Dorsolateral prefrontal cortex (tissue), 120 donors: ENCODE measurements at regions of chr17 and their contacts with region 1.

Region 1: DNA sequence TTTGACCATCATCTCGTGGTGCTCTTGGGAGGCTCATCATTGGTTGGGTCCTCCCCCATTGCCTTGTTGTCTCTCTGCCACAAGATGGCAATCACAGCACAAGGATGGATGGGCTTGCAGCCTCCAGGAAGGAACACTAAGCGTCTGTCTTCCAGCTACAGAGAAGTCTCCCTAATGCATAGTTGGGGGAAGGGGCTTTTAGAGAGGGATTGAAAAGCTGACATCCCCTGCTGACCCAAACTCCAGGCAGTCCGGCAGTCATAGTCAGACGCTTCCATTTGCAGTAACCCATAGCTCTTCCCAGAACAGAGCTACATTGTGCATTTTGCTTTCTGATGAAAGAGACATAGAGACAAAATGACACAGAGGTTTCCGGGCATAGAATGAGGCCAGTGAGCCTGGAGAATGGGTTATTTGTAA is 111.4 kb downstream of the UTP18 start:
- DNase-seq: peak in 9 of 10 donors; percentile 66 to 85 (median 80)
- H3K4me3 ChIP-seq: peak overlapping the region in 51 of 59 donors; percentile 3 to 68 (median 44)
- H3K27ac ChIP-seq: peak overlapping the region; percentile 43 to 99 (median 96)
- H3K27me3 ChIP-seq: no peaks in the 10 kb centered on the region
- CTCF ChIP-seq: peak; percentile 60 to 93 (median 82)

Region 2: DNA sequence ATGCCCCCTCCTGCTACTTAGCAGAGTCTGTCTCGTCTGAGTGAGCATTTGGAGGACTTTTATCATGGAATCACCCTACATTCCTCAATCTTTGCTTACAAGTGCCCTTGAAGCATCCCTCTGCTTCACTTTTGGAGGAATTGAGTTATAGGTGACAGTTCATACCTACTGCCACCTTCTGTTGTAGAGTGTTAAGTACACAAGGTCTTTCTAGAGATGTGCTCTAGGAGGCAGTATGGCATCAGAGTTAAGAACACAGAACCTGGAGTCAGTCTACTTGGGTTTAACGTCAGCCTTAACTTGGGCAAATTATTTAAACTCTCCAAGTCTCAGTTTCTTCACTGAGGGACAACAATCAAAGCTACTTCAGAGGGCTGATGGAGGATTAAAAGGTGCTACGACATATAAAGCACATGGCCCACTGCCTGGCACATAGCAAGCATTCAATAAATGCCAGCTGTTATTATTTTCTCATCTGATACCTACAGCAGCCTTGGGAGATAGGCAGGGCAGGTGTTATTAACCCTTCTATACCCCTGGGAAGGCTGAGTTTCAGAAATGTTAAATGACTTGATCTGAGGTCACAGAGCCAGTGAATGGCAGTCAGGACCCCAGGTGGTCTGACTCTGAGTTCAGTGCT is 49.2 kb before region 1 on chr17:
- intact Hi-C with region 1: loop called in 1 of 2 experiments (anchors 2 kb)
- DNase-seq: no peak
- H3K4me3 ChIP-seq: no peak overlapping the region
- H3K27ac ChIP-seq: no peak overlapping the region
- H3K27me3 ChIP-seq: no peaks in the 10 kb centered on the region
- CTCF ChIP-seq: peak in 54 of 56 donors; percentile 25 to 87 (median 66)

Region 3: DNA sequence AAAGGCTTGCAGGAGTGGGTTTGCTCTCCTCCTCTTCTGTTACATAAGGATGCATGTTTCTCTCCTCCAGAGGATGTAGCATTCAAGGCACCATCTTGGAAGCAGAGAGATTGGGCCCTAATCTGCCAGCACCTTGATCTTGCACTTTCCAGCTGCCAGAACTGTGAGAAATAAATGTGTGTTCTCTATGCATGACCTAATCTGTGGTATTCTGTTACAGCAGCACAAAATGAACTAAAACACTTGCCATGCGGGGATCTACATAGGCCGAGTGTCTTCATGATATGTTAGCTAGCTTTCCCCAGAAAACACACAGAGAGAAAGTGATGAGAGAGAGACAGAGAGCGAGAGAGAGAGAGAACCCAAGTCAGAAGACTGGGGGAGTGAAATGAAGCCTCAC is 162.1 kb after region 1 on chr17:
- intact Hi-C with region 1: loop called (anchors 1 to 2 kb)
- DNase-seq: no peak
- H3K4me3 ChIP-seq: no peak overlapping the region
- H3K27ac ChIP-seq: no peak overlapping the region
- H3K27me3 ChIP-seq: no peaks in the 10 kb centered on the region
- CTCF ChIP-seq: no peak

Region 4: DNA sequence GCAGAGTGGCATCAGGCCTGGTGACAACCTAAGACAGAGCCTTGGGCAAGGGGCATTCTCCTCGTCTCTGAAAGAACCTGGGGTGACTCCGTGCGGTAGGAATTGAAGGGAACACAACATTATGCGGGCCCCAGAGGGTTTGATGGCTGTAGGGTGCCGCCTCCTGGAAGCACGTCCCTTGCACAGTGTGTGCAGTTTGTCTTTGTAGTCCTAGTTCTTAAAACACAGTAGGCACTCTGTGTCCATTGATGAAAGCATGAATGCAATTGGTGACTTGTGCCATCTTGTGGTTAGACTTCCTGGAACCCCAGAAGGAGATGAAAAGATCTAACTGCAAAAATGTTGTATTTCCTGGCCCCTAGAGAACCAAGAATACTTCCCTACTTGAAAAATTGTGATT is 168.4 kb after region 1 on chr17:
- intact Hi-C with region 1: loop called (anchors 1 to 2 kb)
- DNase-seq: peak in 9 of 10 donors; percentile 25 to 72 (median 47)
- H3K4me3 ChIP-seq: no peak overlapping the region
- H3K27ac ChIP-seq: peak overlapping the region in 45 of 59 donors; percentile 9 to 86 (median 67)
- H3K27me3 ChIP-seq: no peaks in the 10 kb centered on the region
- CTCF ChIP-seq: peak in 55 of 56 donors; percentile 38 to 85 (median 60)

Region 5: GRCh38 chr17:51590066-51590656 is 218.4 kb after region 1 on chr17:
- intact Hi-C with region 1: no loop called
- DNase-seq: no peak
- H3K4me3 ChIP-seq: no peak overlapping the region
- H3K27ac ChIP-seq: no peak overlapping the region
- H3K27me3 ChIP-seq: peaks cover 0 to 3% (median 0%) of the 10 kb centered on the region in 45 donors
- CTCF ChIP-seq: no peak

Region 6: DNA sequence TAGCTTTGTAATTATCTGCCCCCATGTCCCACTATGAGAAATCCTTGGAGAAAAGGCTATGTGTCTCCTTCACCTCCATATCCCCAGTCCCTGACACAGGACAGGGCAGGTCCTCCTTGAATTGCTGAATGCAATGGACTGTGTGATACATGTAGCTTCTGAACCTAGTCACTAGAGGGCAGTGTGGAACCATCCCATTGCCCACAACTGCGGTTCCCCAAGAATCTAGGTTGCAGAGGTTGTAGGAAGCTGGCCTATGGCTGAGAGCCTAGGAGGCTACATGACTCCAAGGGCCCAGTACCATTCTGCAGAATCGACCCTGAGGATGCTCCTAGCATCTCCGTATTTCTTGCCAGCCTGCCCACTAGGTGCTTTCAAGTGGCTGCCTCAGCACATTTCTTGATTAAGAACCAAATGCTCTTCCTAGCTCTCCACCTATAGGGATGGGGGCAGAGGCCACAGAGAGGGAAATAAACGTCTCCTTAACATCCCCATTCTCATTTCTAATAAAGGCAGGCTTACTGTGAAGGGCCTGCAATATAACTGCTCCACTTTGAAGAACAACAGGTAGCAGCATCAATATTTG is 392.7 kb after region 1 on chr17:
- intact Hi-C with region 1: loop called in 1 of 2 experiments (anchors 5 kb)
- DNase-seq: peak in 7 of 10 donors; percentile 21 to 76 (median 53)
- H3K4me3 ChIP-seq: no peak overlapping the region
- H3K27ac ChIP-seq: no peak overlapping the region
- H3K27me3 ChIP-seq: peaks cover 0 to 4% (median 0%) of the 10 kb centered on the region in 45 donors
- CTCF ChIP-seq: peak in 55 of 56 donors; percentile 49 to 89 (median 82)